MCF 10A (cell line): ENCODE measurements at regions of chr17 and their contacts with region 1.

Region 1: GRCh38 chr17:49952209-49952911 is 16.6 kb upstream of the DLX4 start:
- DNase-seq: peak; percentile 86
- H3K4me3 Mint-ChIP-seq: no peak overlapping the region
- H3K27ac Mint-ChIP-seq: no peak overlapping the region
- H3K4me1 Mint-ChIP-seq: peaks cover 5% of the 10 kb centered on the region
- H3K27me3 Mint-ChIP-seq: peaks cover 44% of the 10 kb centered on the region
- CTCF ChIP-seq: peak; percentile 80

Region 2: GRCh38 chr17:49939318-49939717 is 13.0 kb before region 1 on chr17:
- CTCF ChIA-PET with region 1: interaction called, 28 read pairs
- POLR2A ChIA-PET with region 1: interaction called, 3 read pairs
- intact Hi-C with region 1: no loop called
- DNase-seq: no peak
- H3K4me3 Mint-ChIP-seq: no peak overlapping the region
- H3K27ac Mint-ChIP-seq: no peak overlapping the region
- H3K4me1 Mint-ChIP-seq: no peaks in the 10 kb centered on the region
- H3K27me3 Mint-ChIP-seq: peaks cover 89% of the 10 kb centered on the region
- CTCF ChIP-seq: no peak

Region 3: GRCh38 chr17:49962599-49963308 is 10.4 kb after region 1 on chr17:
- CTCF ChIA-PET with region 1: interaction called, 16 read pairs
- POLR2A ChIA-PET with region 1: no interaction called
- intact Hi-C with region 1: no loop called
- DNase-seq: no peak
- H3K4me3 Mint-ChIP-seq: no peak overlapping the region
- H3K27ac Mint-ChIP-seq: no peak overlapping the region
- H3K4me1 Mint-ChIP-seq: peaks cover 6% of the 10 kb centered on the region
- H3K27me3 Mint-ChIP-seq: peaks cover 51% of the 10 kb centered on the region
- CTCF ChIP-seq: no peak

Region 4: DNA sequence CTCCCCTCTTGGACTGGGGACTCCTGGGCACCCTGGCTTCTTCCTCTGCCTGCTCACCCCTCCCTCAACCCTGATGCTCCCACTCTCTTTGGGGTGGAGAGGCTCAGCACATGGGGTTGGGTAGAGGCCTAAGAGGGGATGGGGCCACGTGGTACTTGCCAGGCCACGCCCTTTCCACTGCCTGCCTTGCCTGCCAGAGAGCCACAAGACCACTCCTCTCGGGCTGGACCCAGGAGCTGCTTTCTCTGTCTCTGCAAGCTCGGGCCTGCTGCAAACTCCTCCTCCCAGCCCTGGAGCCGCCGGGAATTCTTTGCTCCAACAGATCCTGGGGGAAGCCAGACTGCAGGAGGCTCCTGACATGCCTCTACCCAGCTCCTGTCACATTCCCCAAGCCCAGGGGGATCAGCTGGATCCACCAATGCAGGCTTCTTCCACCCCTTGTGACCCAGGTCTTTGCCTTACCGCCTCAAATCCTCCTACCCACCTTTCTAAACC is 28.4 kb after region 1 on chr17:
- CTCF ChIA-PET with region 1: interaction called, 36 read pairs
- POLR2A ChIA-PET with region 1: interaction called, 5 read pairs
- intact Hi-C with region 1: no loop called
- DNase-seq: peak; percentile 37
- H3K4me3 Mint-ChIP-seq: no peak overlapping the region
- H3K27ac Mint-ChIP-seq: no peak overlapping the region
- H3K4me1 Mint-ChIP-seq: peaks cover 31% of the 10 kb centered on the region
- H3K27me3 Mint-ChIP-seq: no peaks in the 10 kb centered on the region
- CTCF ChIP-seq: no peak

Region 5: DNA sequence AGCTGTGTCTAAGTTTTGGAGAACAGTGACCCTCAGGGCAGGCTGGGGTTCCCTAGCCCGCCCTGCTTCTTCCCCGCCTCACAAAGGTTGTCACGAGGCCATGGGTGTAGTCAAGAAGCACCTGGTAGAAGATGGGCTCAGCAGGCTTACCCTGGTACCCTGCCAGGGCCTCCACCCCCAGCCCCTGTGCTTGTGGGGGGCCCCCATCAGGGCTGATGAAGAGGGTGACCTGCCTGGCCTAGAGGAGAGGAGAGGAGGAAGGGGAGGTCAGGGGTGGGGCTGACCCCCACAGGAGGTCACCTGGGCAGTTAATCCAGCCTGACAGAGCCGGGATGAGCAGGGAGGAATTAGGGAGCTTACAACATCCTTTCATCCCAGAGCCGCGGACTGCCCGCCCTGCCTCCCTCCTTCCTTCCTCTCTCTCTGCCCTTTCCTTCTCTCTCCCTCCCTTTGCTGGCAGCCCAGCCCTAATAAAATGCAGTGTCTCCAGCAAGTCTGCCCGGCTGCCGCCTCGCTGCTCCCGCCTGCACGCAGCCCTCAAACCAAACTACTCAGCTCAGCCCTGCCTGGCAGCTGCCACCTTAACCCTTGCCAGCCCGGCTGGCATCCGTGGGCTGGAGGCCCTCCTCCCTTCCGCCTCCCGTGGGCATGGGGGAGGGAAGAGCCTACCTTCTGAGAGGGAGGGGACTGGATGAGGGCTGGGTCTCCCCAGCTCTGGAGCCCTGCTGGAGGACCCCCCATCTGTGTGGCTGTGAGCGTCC is 35.5 kb after region 1 on chr17:
- CTCF ChIA-PET with region 1: interaction called, 241 read pairs
- POLR2A ChIA-PET with region 1: interaction called, 13 read pairs
- intact Hi-C with region 1: no loop called
- DNase-seq: peak; percentile 23
- H3K4me3 Mint-ChIP-seq: no peak overlapping the region
- H3K27ac Mint-ChIP-seq: no peak overlapping the region
- H3K4me1 Mint-ChIP-seq: peaks cover 17% of the 10 kb centered on the region
- H3K27me3 Mint-ChIP-seq: peaks cover 47% of the 10 kb centered on the region
- CTCF ChIP-seq: no peak

Region 6: GRCh38 chr17:50114849-50115357 is 162.5 kb after region 1 on chr17:
- CTCF ChIA-PET with region 1: no interaction called
- POLR2A ChIA-PET with region 1: no interaction called
- intact Hi-C with region 1: no loop called
- DNase-seq: peak; percentile 68
- H3K4me3 Mint-ChIP-seq: no peak overlapping the region
- H3K27ac Mint-ChIP-seq: no peak overlapping the region
- H3K4me1 Mint-ChIP-seq: no peaks in the 10 kb centered on the region
- H3K27me3 Mint-ChIP-seq: peaks cover 22% of the 10 kb centered on the region
- CTCF ChIP-seq: peak; percentile 46